CD8-positive, alpha-beta T cell (primary cell): ENCODE measurements at regions of chr14 and their contacts with region 1.

Region 1: DNA sequence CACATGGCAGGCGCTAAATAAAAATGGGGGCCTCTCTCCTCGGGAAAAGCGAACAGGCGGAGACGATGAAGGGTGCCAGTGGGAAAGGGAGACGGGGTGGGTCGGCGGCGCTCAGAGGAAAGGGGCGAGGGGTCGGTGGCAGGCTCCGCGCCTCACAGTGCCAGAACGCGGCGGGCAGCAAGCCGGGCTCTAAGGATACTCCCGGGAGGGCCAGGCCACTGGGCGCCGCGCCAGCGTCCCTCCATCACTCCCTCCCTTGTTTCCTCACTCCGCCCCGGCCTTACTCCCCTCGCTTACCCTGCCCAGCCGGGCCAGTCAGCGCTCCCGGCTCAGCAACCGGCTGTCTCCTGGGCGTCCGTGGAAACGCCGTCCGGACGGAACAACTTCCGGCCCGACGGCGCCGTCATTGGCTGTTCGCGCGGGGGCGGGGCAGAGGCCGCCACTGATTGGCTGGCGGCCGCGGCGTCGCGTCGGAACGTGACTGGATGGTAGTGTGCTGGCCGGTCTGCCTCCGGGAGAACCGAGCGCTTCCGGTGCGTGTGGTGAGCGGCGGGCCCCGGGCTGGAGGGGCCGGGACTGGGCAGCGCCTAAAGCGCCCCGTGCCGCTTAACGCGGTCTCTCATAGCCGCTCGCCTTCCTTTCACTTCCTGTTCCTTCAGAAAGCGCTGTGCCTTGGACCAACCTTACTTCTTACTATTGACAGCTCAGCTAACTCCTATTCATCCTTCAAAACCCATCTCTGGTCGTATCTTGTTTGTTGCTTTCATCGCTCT is 53.0 kb downstream of the SLC25A47 start:
- DNase-seq: peak; percentile 86 to 96 (median 90)
- ATAC-seq: peak; percentile 81
- H3K4me3 ChIP-seq: peak within 1 kb of the TSS; percentile 63 to 85
- H3K4me3 Mint-ChIP-seq: peak within 1 kb of the TSS; percentile 92
- H3K27ac ChIP-seq: peak within 1 kb of the TSS; percentile 64 to 90
- H3K27ac Mint-ChIP-seq: peak within 1 kb of the TSS; percentile 91
- H3K4me1 ChIP-seq: peaks cover 23% of the 10 kb centered on the region
- H3K4me1 Mint-ChIP-seq: peaks cover 41% of the 10 kb centered on the region
- H3K27me3 ChIP-seq: no peaks in the 10 kb centered on the region
- H3K27me3 Mint-ChIP-seq: no peaks in the 10 kb centered on the region
- CTCF ChIP-seq: no peak

Region 2: GRCh38 chr14:99480917-99481744 is 895.0 kb before region 1 on chr14 and contains the start of gene CCNK:
- CTCF ChIA-PET with region 1: no interaction called
- POLR2A ChIA-PET with region 1: no interaction called
- intact Hi-C with region 1: loop called in 1 of 2 experiments (anchors 10 kb)
- DNase-seq: peak; percentile 100
- ATAC-seq: peak; percentile 87
- H3K4me3 ChIP-seq: peak within 1 kb of the TSS; percentile 97 to 99
- H3K4me3 Mint-ChIP-seq: peak within 1 kb of the TSS; percentile 99
- H3K27ac ChIP-seq: peak within 1 kb of the TSS; percentile 95 to 96
- H3K27ac Mint-ChIP-seq: peak within 1 kb of the TSS; percentile 99
- H3K4me1 ChIP-seq: peaks cover 38% of the 10 kb centered on the region
- H3K4me1 Mint-ChIP-seq: peaks cover 60% of the 10 kb centered on the region
- H3K27me3 ChIP-seq: no peaks in the 10 kb centered on the region
- H3K27me3 Mint-ChIP-seq: no peaks in the 10 kb centered on the region
- CTCF ChIP-seq: no peak
- total RNA-seq, gene CCNK: 171 to 177 TPM

Region 3: GRCh38 chr14:99982537-99983250 is 393.5 kb before region 1 on chr14:
- CTCF ChIA-PET with region 1: no interaction called
- POLR2A ChIA-PET with region 1: no interaction called
- intact Hi-C with region 1: loop called (anchors 5 kb)
- DNase-seq: peak; percentile 30 to 85 (median 65)
- ATAC-seq: peak; percentile 100
- H3K4me3 ChIP-seq: no peak overlapping the region
- H3K4me3 Mint-ChIP-seq: no peak overlapping the region
- H3K27ac ChIP-seq: no peak overlapping the region
- H3K27ac Mint-ChIP-seq: no peak overlapping the region
- H3K4me1 ChIP-seq: peaks cover 10% of the 10 kb centered on the region
- H3K4me1 Mint-ChIP-seq: peaks cover 12% of the 10 kb centered on the region
- H3K27me3 ChIP-seq: no peaks in the 10 kb centered on the region
- H3K27me3 Mint-ChIP-seq: no peaks in the 10 kb centered on the region
- CTCF ChIP-seq: peak; percentile 95

Region 4: DNA sequence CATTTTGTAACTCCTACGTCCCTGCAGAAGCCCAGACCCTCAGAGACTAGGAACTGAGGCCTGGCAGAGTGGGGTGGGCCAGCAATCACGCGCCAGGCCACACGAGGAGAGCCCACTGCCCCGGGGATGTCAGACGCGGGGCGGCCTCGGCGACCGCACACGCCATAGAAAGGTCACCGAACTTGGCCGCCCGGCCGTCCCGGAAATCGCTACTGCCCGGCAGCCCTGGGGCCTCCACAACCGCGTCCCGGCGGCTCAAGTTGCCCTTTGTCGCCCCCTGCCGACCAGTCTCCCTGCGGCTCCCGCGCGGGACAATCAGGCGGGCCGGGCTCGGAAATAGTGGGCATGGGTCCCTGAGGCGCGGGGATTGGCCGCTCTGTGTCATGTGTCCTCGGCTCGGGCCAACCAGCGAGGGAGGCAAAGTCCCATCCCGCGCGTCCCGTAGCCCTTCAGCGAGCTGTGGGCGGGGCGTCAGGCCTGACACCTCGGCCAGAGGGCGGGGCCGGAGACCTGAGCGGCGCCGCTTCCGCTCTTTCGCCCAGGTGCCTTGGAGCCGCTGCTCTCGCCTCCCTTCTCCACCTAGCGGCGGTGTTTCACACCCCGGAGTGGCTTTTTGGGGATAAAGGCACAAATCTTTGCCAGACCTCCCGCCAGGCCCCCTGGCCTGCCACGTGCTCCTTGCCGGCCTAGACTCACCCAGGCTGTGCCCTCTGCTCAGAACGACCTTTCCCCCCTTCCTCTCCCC is 183.3 kb before region 1 on chr14:
- CTCF ChIA-PET with region 1: interaction called, 5 read pairs
- POLR2A ChIA-PET with region 1: interaction called, 4 read pairs
- intact Hi-C with region 1: loop called (anchors 2 kb)
- DNase-seq: peak; percentile 99 to 100 (median 99)
- ATAC-seq: peak; percentile 98
- H3K4me3 ChIP-seq: peak overlapping the region; percentile 54 to 57
- H3K4me3 Mint-ChIP-seq: peak overlapping the region; percentile 63
- H3K27ac ChIP-seq: peak overlapping the region; percentile 48 to 90
- H3K27ac Mint-ChIP-seq: peak overlapping the region; percentile 90
- H3K4me1 ChIP-seq: peaks cover 12% of the 10 kb centered on the region
- H3K4me1 Mint-ChIP-seq: peaks cover 10% of the 10 kb centered on the region
- H3K27me3 ChIP-seq: no peaks in the 10 kb centered on the region
- H3K27me3 Mint-ChIP-seq: no peaks in the 10 kb centered on the region
- CTCF ChIP-seq: peak; percentile 81

Region 5: DNA sequence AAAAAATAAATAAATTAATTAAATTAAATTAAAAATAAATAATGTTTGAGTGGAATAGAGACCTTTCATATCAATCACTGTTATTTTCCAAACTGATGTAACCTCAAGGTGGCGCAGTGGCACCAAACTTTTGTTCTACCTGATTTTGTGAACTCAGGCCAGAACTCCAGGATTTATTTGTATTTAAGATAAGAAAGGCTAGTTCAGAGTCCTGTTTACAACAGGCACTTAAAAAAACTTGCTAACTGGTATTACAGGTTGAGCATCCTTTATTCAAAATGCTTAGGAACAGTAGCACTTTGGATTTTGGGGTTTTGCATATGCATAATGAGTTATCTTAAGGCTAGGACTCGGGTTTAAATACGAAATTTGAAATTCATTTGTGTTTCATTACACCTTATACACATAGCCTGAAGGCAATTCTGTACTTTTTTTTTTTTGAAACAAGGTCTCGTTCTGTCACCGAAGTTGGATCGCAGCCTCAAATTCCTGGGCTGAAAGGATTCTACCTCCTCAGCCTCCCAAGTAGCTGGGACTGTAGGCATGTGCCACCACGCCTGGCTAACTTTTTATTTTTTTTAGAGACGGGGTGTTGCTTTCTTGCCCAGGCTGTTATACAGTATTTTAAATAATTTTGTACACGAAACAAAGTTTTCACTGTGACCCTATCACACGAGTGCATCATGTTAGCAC is 104.8 kb before region 1 on chr14:
- CTCF ChIA-PET with region 1: interaction called, 5 read pairs
- POLR2A ChIA-PET with region 1: no interaction called
- intact Hi-C with region 1: loop called in 1 of 2 experiments (anchors 2 kb)
- DNase-seq: peak in 5 of 9 experiments; percentile 34 to 50 (median 35)
- ATAC-seq: no peak
- H3K4me3 ChIP-seq: no peak overlapping the region
- H3K4me3 Mint-ChIP-seq: no peak overlapping the region
- H3K27ac ChIP-seq: no peak overlapping the region
- H3K27ac Mint-ChIP-seq: no peak overlapping the region
- H3K4me1 ChIP-seq: peaks cover 42% of the 10 kb centered on the region
- H3K4me1 Mint-ChIP-seq: peaks cover 73% of the 10 kb centered on the region
- H3K27me3 ChIP-seq: no peaks in the 10 kb centered on the region
- H3K27me3 Mint-ChIP-seq: no peaks in the 10 kb centered on the region
- CTCF ChIP-seq: peak; percentile 50

Region 6: DNA sequence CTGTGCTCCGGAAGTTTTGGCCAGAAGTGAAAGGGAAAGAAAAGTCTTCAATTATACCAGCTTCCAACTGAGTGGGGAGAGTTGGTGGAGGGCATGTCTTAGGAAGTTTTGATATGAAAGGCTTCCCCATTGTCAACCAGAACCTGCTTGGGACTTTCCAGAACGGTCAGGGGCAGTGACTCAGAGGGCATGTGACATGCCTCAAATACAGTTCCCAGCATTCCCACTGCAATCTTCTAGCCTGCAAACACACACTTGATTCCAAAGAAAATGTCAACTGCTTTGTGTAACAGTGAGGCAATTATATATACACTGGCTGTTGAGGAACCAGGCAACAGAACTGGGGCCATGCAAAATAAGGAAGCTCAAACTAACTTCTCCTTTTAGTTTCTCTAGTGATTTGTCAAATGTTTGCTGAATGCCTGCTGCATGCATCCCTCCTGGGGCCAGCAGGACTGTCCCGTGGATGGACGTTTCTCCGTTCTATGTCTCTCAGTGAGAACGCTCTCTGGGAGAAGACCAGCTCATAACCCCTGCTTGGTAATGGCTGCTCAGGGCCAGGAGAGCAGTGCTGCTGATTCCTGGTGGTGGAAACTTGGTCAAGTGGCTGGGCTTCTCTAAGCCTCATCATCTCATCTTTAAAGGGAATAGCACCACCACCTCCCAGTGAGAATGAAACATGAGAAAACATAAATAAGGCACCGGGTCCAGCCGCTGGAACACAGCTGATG is 34.7 kb before region 1 on chr14:
- CTCF ChIA-PET with region 1: no interaction called
- POLR2A ChIA-PET with region 1: no interaction called
- intact Hi-C with region 1: no loop called
- DNase-seq: peak in 1 of 9 experiments; percentile 41
- ATAC-seq: no peak
- H3K4me3 ChIP-seq: no peak overlapping the region
- H3K4me3 Mint-ChIP-seq: no peak overlapping the region
- H3K27ac ChIP-seq: no peak overlapping the region
- H3K27ac Mint-ChIP-seq: no peak overlapping the region
- H3K4me1 ChIP-seq: no peaks in the 10 kb centered on the region
- H3K4me1 Mint-ChIP-seq: no peaks in the 10 kb centered on the region
- H3K27me3 ChIP-seq: no peaks in the 10 kb centered on the region
- H3K27me3 Mint-ChIP-seq: no peaks in the 10 kb centered on the region
- CTCF ChIP-seq: no peak

Region 7: GRCh38 chr14:100547633-100548294 is 171.6 kb after region 1 on chr14:
- CTCF ChIA-PET with region 1: no interaction called
- POLR2A ChIA-PET with region 1: no interaction called
- intact Hi-C with region 1: loop called (anchors 5 kb)
- DNase-seq: peak; percentile 8 to 91 (median 51)
- ATAC-seq: peak; percentile 52
- H3K4me3 ChIP-seq: peak overlapping the region in 1 of 2 experiments; percentile 68
- H3K4me3 Mint-ChIP-seq: peak overlapping the region; percentile 57
- H3K27ac ChIP-seq: peak overlapping the region; percentile 64 to 67
- H3K27ac Mint-ChIP-seq: peak overlapping the region; percentile 88
- H3K4me1 ChIP-seq: peaks cover 36% of the 10 kb centered on the region
- H3K4me1 Mint-ChIP-seq: peaks cover 24% of the 10 kb centered on the region
- H3K27me3 ChIP-seq: no peaks in the 10 kb centered on the region
- H3K27me3 Mint-ChIP-seq: no peaks in the 10 kb centered on the region
- CTCF ChIP-seq: no peak